Dendritic cell treated with granulocyte-macrophage colony-stimulating factor and Interleukin-4, amounts not matched to agents 40 ng/mL and 50 ng/mL, for 4 days (primary cell): ENCODE measurements at regions of chr22 and their contacts with region 1.

Region 1: GRCh38 chr22:50341977-50342650 is 1.0 kb upstream of the PPP6R2 start:
- H3K4me3 Mint-ChIP-seq: peak overlapping the region; percentile 65
- H3K27ac Mint-ChIP-seq: peak overlapping the region; percentile 62
- H3K4me1 Mint-ChIP-seq: no peaks in the 10 kb centered on the region
- H3K27me3 Mint-ChIP-seq: no peaks in the 10 kb centered on the region

Region 2: DNA sequence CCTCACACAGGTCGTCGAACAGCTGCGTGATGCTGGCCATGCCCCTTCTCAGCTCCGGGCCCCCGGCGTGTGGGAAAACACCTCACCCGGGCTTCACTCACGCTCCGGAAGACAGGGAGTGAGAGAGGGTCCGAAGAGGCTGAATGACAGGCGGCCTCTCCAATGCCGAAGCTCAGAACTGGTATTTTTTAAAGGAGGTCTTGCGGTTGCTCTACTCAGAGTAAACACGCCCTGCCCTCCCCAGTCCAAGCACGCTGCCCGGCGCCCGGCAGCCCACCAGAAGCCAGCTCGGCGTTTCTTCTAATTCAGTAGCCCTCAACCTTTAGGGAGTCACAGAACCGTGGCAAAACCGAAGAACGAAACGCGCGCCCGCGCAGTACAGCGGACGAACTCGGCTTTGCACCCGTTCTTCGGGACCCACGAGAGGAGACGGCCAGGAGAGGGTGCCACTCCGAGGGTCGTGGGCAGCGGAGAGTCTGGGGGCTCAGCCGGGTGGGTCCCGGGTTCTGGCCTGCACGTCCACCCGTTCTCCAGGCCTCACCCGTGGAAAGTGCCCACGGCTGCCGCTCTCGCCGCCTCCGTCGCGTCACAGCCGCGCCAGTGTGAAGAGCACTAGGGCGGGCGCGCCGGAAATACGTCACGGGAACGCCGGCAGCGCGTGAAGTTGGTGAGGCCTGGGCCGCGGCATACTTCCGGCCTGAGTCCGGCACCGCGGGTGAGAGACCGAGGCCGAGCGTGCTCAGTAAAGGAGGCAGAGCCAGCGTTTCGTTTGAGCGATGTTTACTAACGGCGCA is 97.5 kb before region 1 on chr22 and contains the start of gene TUBGCP6:
- intact Hi-C with region 1: loop called (anchors 2 kb)
- H3K4me3 Mint-ChIP-seq: peak within 1 kb of the TSS; percentile 97
- H3K27ac Mint-ChIP-seq: peak within 1 kb of the TSS; percentile 94
- H3K4me1 Mint-ChIP-seq: peaks cover 65% of the 10 kb centered on the region
- H3K27me3 Mint-ChIP-seq: no peaks in the 10 kb centered on the region

Region 3: GRCh38 chr22:50250555-50251476 is 91.3 kb before region 1 on chr22 and contains the start of gene HDAC10:
- intact Hi-C with region 1: loop called (anchors 2 kb)
- H3K4me3 Mint-ChIP-seq: peak within 1 kb of the TSS; percentile 83
- H3K27ac Mint-ChIP-seq: peak within 1 kb of the TSS; percentile 61
- H3K4me1 Mint-ChIP-seq: peaks cover 45% of the 10 kb centered on the region
- H3K27me3 Mint-ChIP-seq: no peaks in the 10 kb centered on the region

Region 4: DNA sequence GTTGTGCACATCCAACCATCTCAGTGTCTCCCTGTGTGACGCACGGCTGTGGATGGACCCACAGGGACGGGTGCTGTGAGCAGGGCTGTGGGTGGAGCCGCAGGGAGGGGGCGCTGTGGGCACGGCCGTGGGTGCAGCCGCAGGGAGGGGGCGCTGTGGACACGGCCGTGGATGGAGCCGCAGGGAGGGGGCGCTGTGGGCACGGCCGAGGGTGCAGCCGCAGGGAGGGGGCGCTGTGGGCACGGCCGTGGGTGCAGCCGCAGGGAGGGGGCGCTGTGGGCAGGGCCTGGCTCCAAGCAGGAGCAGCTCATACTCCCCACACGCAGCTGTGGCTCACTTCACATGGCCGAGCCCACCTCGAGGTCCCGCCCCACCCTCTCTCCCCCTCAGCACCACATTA is 66.0 kb before region 1 on chr22:
- intact Hi-C with region 1: loop called (anchors 1 kb)
- H3K4me3 Mint-ChIP-seq: no peak overlapping the region
- H3K27ac Mint-ChIP-seq: peak overlapping the region; percentile 1
- H3K4me1 Mint-ChIP-seq: peaks cover 25% of the 10 kb centered on the region
- H3K27me3 Mint-ChIP-seq: peaks cover 9% of the 10 kb centered on the region

Region 5: DNA sequence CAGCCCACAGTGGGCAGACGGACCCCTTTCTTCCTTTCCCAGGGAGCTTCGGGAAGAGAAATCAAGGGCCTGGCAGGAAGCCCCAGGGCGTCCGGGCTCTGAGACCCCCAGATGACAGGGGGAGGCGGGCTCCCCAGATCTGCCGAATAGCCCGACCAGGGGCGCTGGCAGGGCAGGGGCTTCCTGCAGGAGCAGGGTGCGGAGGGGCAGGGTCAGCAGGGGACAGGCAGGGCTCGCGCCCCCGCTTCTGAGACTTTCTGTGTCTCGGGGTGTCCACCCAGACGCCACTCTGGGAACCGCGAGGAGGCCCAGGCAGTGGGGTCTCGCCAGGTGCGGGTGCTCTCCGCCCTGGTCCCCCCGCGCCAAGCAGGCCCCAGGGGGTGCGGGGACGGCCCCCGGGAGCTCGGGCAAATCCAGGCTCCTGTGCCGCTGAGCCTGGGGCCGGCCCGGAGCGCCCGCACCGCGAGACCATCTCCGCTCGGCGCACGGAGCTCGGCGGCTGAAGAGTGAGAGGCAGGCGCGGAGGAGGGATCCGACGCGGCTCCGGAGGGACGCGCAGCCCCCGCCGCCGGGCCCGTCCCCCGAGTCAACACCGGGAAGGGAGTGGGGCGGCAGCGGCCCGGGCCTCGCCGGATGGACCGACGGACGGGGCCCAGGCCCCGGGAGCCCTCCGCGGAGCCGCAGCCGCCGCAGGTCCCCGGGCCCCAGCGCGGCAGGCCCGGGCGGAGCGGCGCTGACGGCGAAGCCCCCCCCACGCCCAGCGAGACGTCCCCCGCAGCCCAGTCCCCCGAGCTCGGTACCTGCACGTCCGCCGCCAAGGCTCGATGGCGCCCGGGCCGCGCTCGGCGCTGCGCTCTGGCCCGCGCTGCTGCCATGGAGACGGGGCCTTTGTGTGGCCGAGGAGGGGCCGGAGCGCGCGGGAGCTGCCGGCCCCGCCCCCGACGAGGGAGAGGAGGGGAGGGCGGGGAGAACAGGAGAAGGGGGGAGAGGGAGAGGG is 35.1 kb before region 1 on chr22 and contains the start of gene PLXNB2:
- intact Hi-C with region 1: loop called (anchors 5 kb)
- H3K4me3 Mint-ChIP-seq: peak within 1 kb of the TSS; percentile 77
- H3K27ac Mint-ChIP-seq: peak within 1 kb of the TSS; percentile 89
- H3K4me1 Mint-ChIP-seq: peaks cover 67% of the 10 kb centered on the region
- H3K27me3 Mint-ChIP-seq: no peaks in the 10 kb centered on the region

Region 6: GRCh38 chr22:50326959-50327710 is 15.0 kb before region 1 on chr22 and contains the start of gene DENND6B:
- intact Hi-C with region 1: no loop called
- H3K4me3 Mint-ChIP-seq: peak within 1 kb of the TSS; percentile 82
- H3K27ac Mint-ChIP-seq: peak within 1 kb of the TSS; percentile 92
- H3K4me1 Mint-ChIP-seq: peaks cover 16% of the 10 kb centered on the region
- H3K27me3 Mint-ChIP-seq: peaks cover 33% of the 10 kb centered on the region

Region 7: GRCh38 chr22:50417411-50418210 is 75.5 kb after region 1 on chr22:
- intact Hi-C with region 1: no loop called
- H3K4me3 Mint-ChIP-seq: no peak overlapping the region
- H3K27ac Mint-ChIP-seq: peak overlapping the region; percentile 92
- H3K4me1 Mint-ChIP-seq: peaks cover 31% of the 10 kb centered on the region
- H3K27me3 Mint-ChIP-seq: no peaks in the 10 kb centered on the region